Cardiac septum (tissue), 1 donor: ENCODE measurements at regions of chr14 and their contacts with region 1.

Region 1: GRCh38 chr14:23929822-23930294 is 23.7 kb upstream of the DHRS4 start:
- DNase-seq: peak; percentile 85

Region 2: GRCh38 chr14:23539248-23540140 is 390.4 kb before region 1 on chr14:
- intact Hi-C with region 1: no loop called
- DNase-seq: no peak

Region 3: GRCh38 chr14:23588884-23589598 is 340.8 kb before region 1 on chr14:
- intact Hi-C with region 1: loop called (anchors 2 kb)
- DNase-seq: peak; percentile 87

Region 4: GRCh38 chr14:23631702-23632460 is 298.0 kb before region 1 on chr14:
- intact Hi-C with region 1: loop called (anchors 1 kb)
- DNase-seq: peak; percentile 87